ENCODE measurements at regions of chr9 and their contacts with region 1.

Region 1: GRCh38 chr9:10806868-10807267 is 194.1 kb upstream of the PTPRD start:
- DNase-seq: no peak
- H3K4me3 ChIP-seq: no peak overlapping the region
- H3K27ac ChIP-seq: no peak overlapping the region
- H3K4me1 ChIP-seq: no peaks in the 10 kb centered on the region
- H3K27me3 ChIP-seq: no peaks in the 10 kb centered on the region
- CTCF ChIP-seq: no peak
- EP300 ChIP-seq: no peak
- POLR2A ChIP-seq: no peak

Region 2: DNA sequence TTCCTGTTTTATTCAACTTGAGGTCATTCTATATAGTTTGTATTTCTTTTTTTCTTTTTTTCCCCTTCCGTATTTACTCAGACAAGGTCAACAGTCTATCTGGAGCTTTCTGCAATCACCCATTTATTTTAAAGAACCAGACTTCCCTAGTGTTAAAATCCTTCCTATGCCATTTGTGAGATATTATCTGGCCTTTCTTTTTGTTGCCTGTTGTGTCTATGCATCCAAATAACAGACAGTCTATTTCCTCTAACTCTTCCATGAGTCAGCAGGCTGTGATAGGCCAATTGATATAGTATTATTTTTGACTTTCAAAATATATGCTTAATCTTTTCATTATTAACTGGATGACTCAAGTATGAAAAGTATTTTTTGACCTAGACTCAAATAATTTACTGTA is 97.1 kb after region 1 on chr9:
- in situ Hi-C with region 1: loop called in 1 of 4 experiments (anchors 25 kb)
- intact Hi-C with region 1: no loop called
- DNase-seq: no peak
- H3K4me3 ChIP-seq: no peak overlapping the region
- H3K27ac ChIP-seq: no peak overlapping the region
- H3K4me1 ChIP-seq: no peaks in the 10 kb centered on the region
- H3K27me3 ChIP-seq: no peaks in the 10 kb centered on the region
- CTCF ChIP-seq: no peak
- EP300 ChIP-seq: no peak
- POLR2A ChIP-seq: no peak

Region 3: GRCh38 chr9:11356067-11356466 is 549.2 kb after region 1 on chr9:
- in situ Hi-C with region 1: no loop called
- intact Hi-C with region 1: no loop called
- DNase-seq: no peak
- H3K4me3 ChIP-seq: no peak overlapping the region
- H3K27ac ChIP-seq: no peak overlapping the region
- H3K4me1 ChIP-seq: no peaks in the 10 kb centered on the region
- H3K27me3 ChIP-seq: no peaks in the 10 kb centered on the region
- CTCF ChIP-seq: no peak
- EP300 ChIP-seq: no peak
- POLR2A ChIP-seq: no peak

Region 4: GRCh38 chr9:11595756-11596155 is 788.9 kb after region 1 on chr9:
- in situ Hi-C with region 1: no loop called
- intact Hi-C with region 1: no loop called
- DNase-seq: no peak
- H3K4me3 ChIP-seq: no peak overlapping the region
- H3K27ac ChIP-seq: no peak overlapping the region
- H3K4me1 ChIP-seq: no peaks in the 10 kb centered on the region
- H3K27me3 ChIP-seq: no peaks in the 10 kb centered on the region
- CTCF ChIP-seq: no peak
- EP300 ChIP-seq: no peak
- POLR2A ChIP-seq: no peak

Region 5: GRCh38 chr9:12554636-12555035 is 1747.8 kb after region 1 on chr9:
- in situ Hi-C with region 1: no loop called
- intact Hi-C with region 1: no loop called
- DNase-seq: no peak
- H3K4me3 ChIP-seq: no peak overlapping the region
- H3K27ac ChIP-seq: no peak overlapping the region
- H3K4me1 ChIP-seq: no peaks in the 10 kb centered on the region
- H3K27me3 ChIP-seq: no peaks in the 10 kb centered on the region
- CTCF ChIP-seq: no peak
- EP300 ChIP-seq: no peak
- POLR2A ChIP-seq: no peak

Measured in transverse colon (tissue), 4 donors.